Endothelial cell of umbilical vein (primary cell): ENCODE measurements at regions of chr20 and their contacts with region 1.

Region 1: GRCh38 chr20:40962730-40963504 is 65.7 kb upstream of the TOP1 start:
- DNase-seq: peak; percentile 62
- H3K4me3 ChIP-seq: no peak overlapping the region
- H3K27ac ChIP-seq: no peak overlapping the region
- H3K4me1 ChIP-seq: no peaks in the 10 kb centered on the region
- H3K27me3 ChIP-seq: no peaks in the 10 kb centered on the region
- CTCF ChIP-seq: peak; percentile 78 to 82
- POLR2A ChIP-seq: no peak

Region 2: GRCh38 chr20:39112178-39112743 is 1850.7 kb before region 1 on chr20:
- CTCF ChIA-PET with region 1: interaction called, 56 read pairs
- POLR2A ChIA-PET with region 1: no interaction called
- dilution Hi-C with region 1: no loop called
- intact Hi-C with region 1: loop called (anchors 1 kb)
- DNase-seq: peak; percentile 41
- H3K4me3 ChIP-seq: no peak overlapping the region
- H3K27ac ChIP-seq: no peak overlapping the region
- H3K4me1 ChIP-seq: peaks cover 22% of the 10 kb centered on the region
- H3K27me3 ChIP-seq: peaks cover 2 to 20% of the 10 kb centered on the region in 2 experiments
- CTCF ChIP-seq: peak; percentile 49 to 62
- POLR2A ChIP-seq: no peak

Region 3: DNA sequence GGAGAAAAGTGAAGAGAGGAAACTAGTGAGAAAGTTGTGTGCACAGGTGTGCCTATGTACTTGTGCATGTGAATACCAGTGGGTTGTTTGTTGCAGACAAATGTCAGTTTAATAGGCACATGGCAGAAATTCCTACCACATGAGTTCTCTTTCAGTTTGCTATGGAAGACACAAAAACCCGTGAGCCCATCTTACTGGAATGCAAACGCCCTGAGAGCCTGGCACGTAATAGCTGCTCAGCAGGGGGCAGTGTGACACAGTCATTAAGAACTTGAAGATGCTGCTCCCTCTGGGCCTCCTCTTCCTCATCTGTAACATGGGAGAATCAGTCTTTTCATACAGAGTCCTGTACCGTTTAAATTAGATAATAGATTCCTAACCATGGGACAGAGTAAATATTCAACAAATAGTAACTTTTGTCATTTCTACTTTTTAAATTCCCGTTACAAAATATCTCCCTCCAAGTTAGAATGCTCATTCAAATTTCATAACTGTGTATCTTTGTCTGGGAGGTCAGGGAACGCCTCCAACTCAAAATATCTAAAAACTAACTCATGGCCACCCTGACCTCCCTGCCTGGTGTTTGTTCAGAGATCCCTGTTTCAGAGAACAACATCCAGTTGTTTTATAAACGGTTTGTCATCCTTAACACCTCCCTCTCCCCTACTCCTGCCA is 1076.8 kb before region 1 on chr20:
- CTCF ChIA-PET with region 1: interaction called, 23 read pairs
- POLR2A ChIA-PET with region 1: no interaction called
- dilution Hi-C with region 1: no loop called
- intact Hi-C with region 1: no loop called
- DNase-seq: peak; percentile 58
- H3K4me3 ChIP-seq: no peak overlapping the region
- H3K27ac ChIP-seq: no peak overlapping the region
- H3K4me1 ChIP-seq: no peaks in the 10 kb centered on the region
- H3K27me3 ChIP-seq: no peaks in the 10 kb centered on the region
- CTCF ChIP-seq: peak; percentile 58
- POLR2A ChIP-seq: no peak

Region 4: GRCh38 chr20:40689943-40690835 is 272.7 kb before region 1 on chr20:
- CTCF ChIA-PET with region 1: interaction called, 19 read pairs
- POLR2A ChIA-PET with region 1: no interaction called
- dilution Hi-C with region 1: no loop called
- intact Hi-C with region 1: no loop called
- DNase-seq: peak; percentile 81
- H3K4me3 ChIP-seq: peak overlapping the region; percentile 16 to 38 (median 24)
- H3K27ac ChIP-seq: peak overlapping the region; percentile 9
- H3K4me1 ChIP-seq: peaks cover 9% of the 10 kb centered on the region
- H3K27me3 ChIP-seq: peaks cover 45 to 65% of the 10 kb centered on the region in 2 experiments
- CTCF ChIP-seq: peak; percentile 95
- POLR2A ChIP-seq: no peak

Region 5: GRCh38 chr20:40728470-40728869 is 234.4 kb before region 1 on chr20:
- CTCF ChIA-PET with region 1: interaction called, 14 read pairs
- POLR2A ChIA-PET with region 1: no interaction called
- dilution Hi-C with region 1: no loop called
- intact Hi-C with region 1: no loop called
- DNase-seq: no peak
- H3K4me3 ChIP-seq: no peak overlapping the region
- H3K27ac ChIP-seq: no peak overlapping the region
- H3K4me1 ChIP-seq: no peaks in the 10 kb centered on the region
- H3K27me3 ChIP-seq: peaks cover 4 to 13% of the 10 kb centered on the region in 2 experiments
- CTCF ChIP-seq: peak; percentile 7 to 14
- POLR2A ChIP-seq: no peak

Region 6: DNA sequence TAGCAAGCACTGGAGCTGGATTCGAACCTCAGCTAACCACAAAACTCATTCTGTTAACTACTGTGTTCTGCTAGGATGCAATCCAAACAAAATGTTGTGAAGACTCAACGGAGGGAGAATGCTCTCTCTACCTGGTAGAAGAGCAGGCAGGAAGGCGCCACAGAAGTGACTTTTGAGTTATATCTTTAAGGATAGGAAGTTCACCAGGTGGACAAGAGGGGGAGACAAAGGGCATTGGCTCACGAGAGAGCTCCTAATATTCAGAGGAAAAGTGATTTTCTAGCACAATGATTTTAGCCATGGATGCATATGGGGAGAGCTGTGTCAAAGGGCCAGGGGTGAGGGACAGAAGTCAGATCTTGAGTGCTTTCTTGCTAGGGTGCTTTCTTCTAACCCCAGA is 165.5 kb before region 1 on chr20:
- CTCF ChIA-PET with region 1: interaction called, 27 read pairs
- POLR2A ChIA-PET with region 1: no interaction called
- dilution Hi-C with region 1: no loop called
- intact Hi-C with region 1: loop called (anchors 1 kb)
- DNase-seq: no peak
- H3K4me3 ChIP-seq: no peak overlapping the region
- H3K27ac ChIP-seq: no peak overlapping the region
- H3K4me1 ChIP-seq: no peaks in the 10 kb centered on the region
- H3K27me3 ChIP-seq: peaks cover 2 to 5% of the 10 kb centered on the region in 2 experiments
- CTCF ChIP-seq: peak in 1 of 2 donors; percentile 33
- POLR2A ChIP-seq: no peak

Region 7: GRCh38 chr20:40982415-40983145 is 19.7 kb after region 1 on chr20:
- CTCF ChIA-PET with region 1: interaction called, 12 read pairs
- POLR2A ChIA-PET with region 1: no interaction called
- dilution Hi-C with region 1: no loop called
- intact Hi-C with region 1: no loop called
- DNase-seq: no peak
- H3K4me3 ChIP-seq: no peak overlapping the region
- H3K27ac ChIP-seq: no peak overlapping the region
- H3K4me1 ChIP-seq: no peaks in the 10 kb centered on the region
- H3K27me3 ChIP-seq: no peaks in the 10 kb centered on the region
- CTCF ChIP-seq: no peak
- POLR2A ChIP-seq: no peak